ENCODE measurements at regions of chr7 and their contacts with region 1.

Region 1: DNA sequence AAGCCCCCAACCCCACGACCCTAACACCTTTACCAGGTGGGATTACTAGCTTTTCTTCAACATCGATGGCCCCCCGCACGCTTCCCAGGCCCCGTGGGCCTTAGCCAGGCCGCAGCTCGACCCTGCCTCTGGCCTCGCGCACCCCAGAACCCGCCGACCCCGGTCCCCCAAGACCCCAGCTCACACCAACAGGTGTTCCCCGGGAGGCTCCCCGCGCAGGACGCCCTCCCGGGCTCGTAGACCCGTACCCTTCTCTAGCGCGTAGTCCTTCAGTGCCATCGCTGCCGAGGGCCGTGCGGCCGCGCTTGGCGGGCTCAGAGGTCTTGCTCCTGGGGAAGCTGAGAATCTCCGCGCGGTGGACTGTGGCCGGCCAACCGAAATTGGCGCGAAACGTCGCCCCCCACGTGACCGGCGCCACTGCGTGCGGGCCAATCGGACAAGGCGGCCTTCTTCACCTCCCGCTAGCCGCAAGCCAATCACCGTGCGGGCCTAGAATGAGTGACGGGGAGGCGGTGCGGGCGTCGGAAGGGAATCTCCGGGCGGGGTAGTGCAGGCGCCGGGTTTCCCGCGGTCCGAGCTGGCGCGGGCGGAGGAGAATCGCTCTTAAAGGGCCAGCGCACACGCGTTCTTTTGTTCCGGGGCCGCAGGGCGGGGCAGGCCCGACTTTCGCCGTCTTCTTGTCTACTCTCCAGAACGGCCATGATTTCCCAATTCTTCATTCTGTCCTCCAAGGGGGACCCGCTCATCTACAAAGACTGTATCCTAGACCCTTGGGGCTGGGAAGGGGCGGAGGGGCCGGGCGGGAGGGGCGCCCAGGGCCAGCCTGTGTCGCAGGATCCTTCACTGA is at the starts of genes AP4M1 and MCM7:
- H3K4me3 Mint-ChIP-seq: peak within 1 kb of the TSS; percentile 93
- H3K27ac Mint-ChIP-seq: peak within 1 kb of the TSS; percentile 98
- H3K4me1 Mint-ChIP-seq: peaks cover 30% of the 10 kb centered on the region
- H3K27me3 Mint-ChIP-seq: no peaks in the 10 kb centered on the region

Region 2: GRCh38 chr7:99955235-99955634 is 146.0 kb before region 1 on chr7:
- intact Hi-C with region 1: no loop called
- H3K4me3 Mint-ChIP-seq: no peak overlapping the region
- H3K27ac Mint-ChIP-seq: no peak overlapping the region
- H3K4me1 Mint-ChIP-seq: peaks cover 23% of the 10 kb centered on the region
- H3K27me3 Mint-ChIP-seq: peaks cover 17% of the 10 kb centered on the region

Region 3: DNA sequence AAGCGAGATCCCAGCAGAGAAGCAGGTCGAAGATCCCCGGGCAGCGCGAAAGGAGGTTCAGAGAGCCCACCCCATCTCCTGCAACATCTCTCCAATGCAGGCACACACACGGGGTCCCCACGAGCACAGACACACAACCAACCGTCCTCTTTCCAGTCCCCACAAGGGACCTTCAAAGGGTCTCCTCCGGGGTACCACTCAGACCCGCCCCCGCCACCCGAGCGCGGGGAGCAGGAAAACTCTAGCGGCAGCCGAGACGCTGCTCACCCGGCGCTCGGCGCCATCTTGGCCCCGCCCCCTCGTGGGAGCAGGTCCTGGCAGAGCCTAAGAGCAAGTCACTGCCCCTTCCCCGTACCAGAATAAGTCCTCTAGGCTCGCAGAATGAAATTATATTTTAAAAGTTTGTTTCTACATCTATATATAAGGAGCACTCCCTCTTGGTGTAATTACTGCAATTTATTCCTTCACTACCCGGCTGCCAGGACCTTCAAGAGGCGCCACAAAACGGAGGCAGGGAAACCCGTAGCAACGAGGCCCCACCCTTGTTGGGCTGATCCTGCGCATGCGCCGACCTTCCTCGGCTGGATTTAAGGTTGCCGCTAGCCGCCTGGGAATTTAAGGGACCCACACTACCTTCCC is 17.9 kb after region 1 on chr7 and contains the starts of genes CNPY4 and TAF6:
- intact Hi-C with region 1: loop called (anchors 2 kb)
- H3K4me3 Mint-ChIP-seq: peak within 1 kb of the TSS; percentile 100
- H3K27ac Mint-ChIP-seq: peak within 1 kb of the TSS; percentile 97
- H3K4me1 Mint-ChIP-seq: peaks cover 45% of the 10 kb centered on the region
- H3K27me3 Mint-ChIP-seq: no peaks in the 10 kb centered on the region

Region 4: GRCh38 chr7:100126931-100127865 is 26.0 kb after region 1 on chr7 and contains the start of gene MBLAC1:
- intact Hi-C with region 1: loop called (anchors 2 kb)
- H3K4me3 Mint-ChIP-seq: peak within 1 kb of the TSS; percentile 98
- H3K27ac Mint-ChIP-seq: peak within 1 kb of the TSS; percentile 99
- H3K4me1 Mint-ChIP-seq: peaks cover 48% of the 10 kb centered on the region
- H3K27me3 Mint-ChIP-seq: peaks cover 17% of the 10 kb centered on the region